PC-3 (cell line): ENCODE measurements at regions of chr1 and their contacts with region 1.

Region 1: DNA sequence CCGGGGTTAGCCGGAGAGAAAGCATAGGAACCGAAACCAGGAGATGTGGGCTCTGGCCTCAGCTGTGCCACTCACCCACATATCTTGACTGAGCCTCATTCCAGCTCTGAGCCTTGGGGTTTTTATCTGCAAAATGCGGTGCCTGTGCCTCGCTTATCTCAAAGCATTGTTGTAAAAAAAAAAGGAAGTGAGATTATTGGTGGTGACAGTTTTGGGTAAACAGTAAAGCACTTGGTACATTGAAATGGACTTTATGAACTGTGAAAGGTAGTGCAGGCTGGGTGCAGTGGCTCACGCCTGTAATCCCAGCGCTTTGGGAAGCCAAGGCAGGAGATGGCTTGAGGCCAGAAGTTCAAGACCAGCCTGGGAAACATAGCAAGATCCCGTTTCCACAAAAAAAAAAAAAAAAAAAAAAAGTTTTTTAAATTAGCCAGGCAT is 3.8 kb downstream of the PTAFR start:
- DNase-seq: no peak
- ATAC-seq: no peak
- H3K4me3 ChIP-seq: no peak overlapping the region
- H3K27ac ChIP-seq: no peak overlapping the region
- H3K4me1 ChIP-seq: peaks cover 14% of the 10 kb centered on the region
- H3K27me3 ChIP-seq: no peaks in the 10 kb centered on the region
- CTCF ChIP-seq: no peak

Region 2: DNA sequence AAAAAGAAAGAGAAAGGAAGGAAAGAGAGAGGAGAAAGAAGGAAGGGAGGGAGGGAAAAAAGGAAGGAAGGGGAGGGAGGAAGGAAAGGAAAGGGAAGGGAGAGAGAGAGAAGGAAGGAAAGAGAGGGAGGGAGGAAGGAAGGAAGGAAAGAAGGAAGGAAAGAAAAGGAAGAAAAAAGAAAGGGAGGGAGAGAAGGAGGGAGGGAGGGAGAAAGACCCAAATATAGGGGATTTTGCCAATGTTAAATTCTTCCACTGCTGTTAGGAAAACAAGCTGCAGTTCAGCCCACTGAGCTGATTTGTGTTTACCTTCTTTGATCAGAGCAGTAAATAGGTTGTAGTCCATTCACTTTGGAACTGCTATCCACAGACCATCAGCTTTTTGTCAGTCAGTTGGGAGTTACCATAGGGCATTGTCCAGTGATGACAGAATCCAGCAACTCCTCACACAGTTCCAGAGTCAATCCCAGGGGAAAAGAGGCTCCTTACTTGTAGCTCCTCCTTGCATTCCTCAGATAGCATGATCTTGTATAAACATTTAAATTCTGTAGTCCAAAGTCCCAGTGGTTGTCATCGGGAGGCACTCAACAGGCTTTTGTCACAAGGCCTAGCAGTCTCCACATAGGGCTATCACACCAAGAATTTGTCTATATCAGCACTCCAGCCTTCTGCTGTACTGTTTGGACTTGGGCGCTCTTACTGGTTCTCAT is 355.7 kb before region 1 on chr1:
- CTCF ChIA-PET with region 1: interaction called, 10 read pairs
- POLR2A ChIA-PET with region 1: no interaction called
- intact Hi-C with region 1: no loop called
- DNase-seq: no peak
- ATAC-seq: no peak
- H3K4me3 ChIP-seq: no peak overlapping the region
- H3K27ac ChIP-seq: no peak overlapping the region
- H3K4me1 ChIP-seq: no peaks in the 10 kb centered on the region
- H3K27me3 ChIP-seq: no peaks in the 10 kb centered on the region
- CTCF ChIP-seq: no peak